ENCODE measurements at regions of chr15 and their contacts with region 1.

Region 1: GRCh38 chr15:91150502-91151160 is 50.6 kb downstream of the SV2B start:
- DNase-seq: no peak
- ATAC-seq: no peak
- H3K4me3 ChIP-seq: no peak overlapping the region
- H3K27ac ChIP-seq: no peak overlapping the region
- H3K4me1 ChIP-seq: no peaks in the 10 kb centered on the region
- H3K27me3 ChIP-seq: peaks cover 26% of the 10 kb centered on the region
- CTCF ChIP-seq: no peak

Region 2: GRCh38 chr15:91214675-91215590 is 64.3 kb after region 1 on chr15:
- intact Hi-C with region 1: loop called (anchors 10 kb)
- DNase-seq: no peak
- ATAC-seq: no peak
- H3K4me3 ChIP-seq: no peak overlapping the region
- H3K27ac ChIP-seq: no peak overlapping the region
- H3K4me1 ChIP-seq: no peaks in the 10 kb centered on the region
- H3K27me3 ChIP-seq: no peaks in the 10 kb centered on the region
- CTCF ChIP-seq: no peak

Region 3: DNA sequence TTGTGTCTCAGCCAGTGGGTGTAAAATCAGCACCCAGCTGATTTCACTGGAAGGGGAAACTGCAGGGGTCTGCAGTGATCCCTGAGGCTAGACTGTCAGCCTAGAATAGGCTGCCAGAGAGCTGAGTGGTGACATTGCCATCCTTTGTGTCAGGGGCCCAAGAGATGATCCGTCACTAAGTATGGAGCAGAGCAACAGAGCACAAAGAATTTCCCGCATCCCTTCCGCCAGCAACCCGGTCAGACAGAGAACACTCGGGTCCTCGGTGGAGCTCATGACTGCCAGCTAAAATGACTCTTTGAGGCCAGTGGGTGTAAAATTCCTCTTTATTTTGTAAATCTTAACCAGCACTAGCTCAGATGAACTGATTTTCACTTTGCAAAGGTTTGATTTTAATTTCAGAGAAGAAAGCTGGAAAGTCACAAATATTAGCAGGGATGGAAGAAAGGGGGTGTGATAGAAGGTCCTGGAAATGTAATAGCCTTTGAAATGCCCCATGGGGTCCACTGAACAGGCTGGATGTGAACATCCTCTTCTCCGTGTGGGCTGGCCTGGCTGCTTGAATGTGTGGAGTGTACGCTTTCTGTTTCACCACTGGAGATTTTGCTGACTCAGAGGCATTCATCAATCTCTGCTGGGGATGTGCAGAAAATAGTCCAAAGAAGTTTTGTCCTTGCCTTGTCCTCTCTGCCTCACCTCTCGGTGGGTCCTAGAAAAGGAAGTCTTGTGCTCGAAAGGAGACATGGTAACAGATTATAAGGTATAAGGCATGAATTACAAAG is 88.2 kb after region 1 on chr15:
- intact Hi-C with region 1: no loop called
- DNase-seq: no peak
- ATAC-seq: no peak
- H3K4me3 ChIP-seq: no peak overlapping the region
- H3K27ac ChIP-seq: no peak overlapping the region
- H3K4me1 ChIP-seq: no peaks in the 10 kb centered on the region
- H3K27me3 ChIP-seq: peaks cover 12% of the 10 kb centered on the region
- CTCF ChIP-seq: no peak

Measured in upper lobe of right lung (tissue), 1 donor.